ENCODE measurements at regions of chr7 and their contacts with region 1.

Region 1: DNA sequence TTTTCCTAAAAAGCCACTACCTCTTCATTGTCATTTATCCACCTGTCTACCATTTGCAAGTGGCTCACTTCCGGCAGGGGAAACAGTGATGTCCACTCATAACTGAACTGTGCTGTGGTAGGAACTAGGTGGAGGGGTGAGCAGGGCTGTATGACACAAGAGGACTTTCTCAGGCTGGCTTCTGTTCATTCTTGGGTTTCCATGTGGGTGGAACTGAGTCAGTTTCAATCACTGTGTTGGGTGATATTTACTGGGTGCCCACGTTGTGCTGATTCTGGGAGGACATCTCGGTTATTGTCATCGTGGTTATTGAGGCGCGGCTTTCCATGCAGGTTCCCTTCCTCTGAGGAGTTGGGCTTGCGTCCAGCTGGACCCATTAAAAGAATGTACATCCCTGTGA is 38.8 kb downstream of the RAMP3 start:
- DNase-seq: peak; percentile 81
- ATAC-seq: peak; percentile 98
- H3K4me3 Mint-ChIP-seq: no peak overlapping the region
- H3K27ac Mint-ChIP-seq: no peak overlapping the region
- H3K4me1 Mint-ChIP-seq: peaks cover 23% of the 10 kb centered on the region
- H3K27me3 Mint-ChIP-seq: peaks cover 26% of the 10 kb centered on the region

Region 2: GRCh38 chr7:44633254-44634186 is 562.9 kb before region 1 on chr7:
- CTCF ChIA-PET with region 1: no interaction called
- POLR2A ChIA-PET with region 1: no interaction called
- intact Hi-C with region 1: loop called in 1 of 2 experiments (anchors 5 kb)
- DNase-seq: peak; percentile 72
- ATAC-seq: peak; percentile 57
- H3K4me3 Mint-ChIP-seq: peak overlapping the region; percentile 51
- H3K27ac Mint-ChIP-seq: peak overlapping the region; percentile 93
- H3K4me1 Mint-ChIP-seq: peaks cover 93% of the 10 kb centered on the region
- H3K27me3 Mint-ChIP-seq: no peaks in the 10 kb centered on the region

Region 3: GRCh38 chr7:45324791-45325190 is 128.4 kb after region 1 on chr7:
- CTCF ChIA-PET with region 1: no interaction called
- POLR2A ChIA-PET with region 1: no interaction called
- intact Hi-C with region 1: no loop called
- DNase-seq: no peak
- ATAC-seq: no peak
- H3K4me3 Mint-ChIP-seq: no peak overlapping the region
- H3K27ac Mint-ChIP-seq: no peak overlapping the region
- H3K4me1 Mint-ChIP-seq: no peaks in the 10 kb centered on the region
- H3K27me3 Mint-ChIP-seq: peaks cover 6% of the 10 kb centered on the region

Region 4: GRCh38 chr7:45543461-45543860 is 347.1 kb after region 1 on chr7:
- CTCF ChIA-PET with region 1: no interaction called
- POLR2A ChIA-PET with region 1: no interaction called
- intact Hi-C with region 1: loop called in 1 of 2 experiments (anchors 5 kb)
- DNase-seq: no peak
- ATAC-seq: no peak
- H3K4me3 Mint-ChIP-seq: no peak overlapping the region
- H3K27ac Mint-ChIP-seq: no peak overlapping the region
- H3K4me1 Mint-ChIP-seq: peaks cover 1% of the 10 kb centered on the region
- H3K27me3 Mint-ChIP-seq: peaks cover 2% of the 10 kb centered on the region

Measured in activated CD4-positive, alpha-beta T cell treated with anti-CD3 and anti-CD28 coated beads for 36 hours (primary cell).